A549 (cell line): ENCODE measurements at regions of chr11 and their contacts with region 1.

Region 1: GRCh38 chr11:30333405-30333804 is 10.5 kb downstream of the ARL14EP start:
- DNase-seq: peak in 1 of 2 experiments; percentile 31
- ATAC-seq: peak; percentile 74 to 86; a peak in 5 of 6 replicates
- H3K4me3 ChIP-seq: no peak overlapping the region
- H3K27ac ChIP-seq: no peak overlapping the region
- H3K4me1 ChIP-seq: no peaks in the 10 kb centered on the region
- CTCF ChIP-seq: peak; percentile 61
- EP300 ChIP-seq: no peak
- POLR2A ChIP-seq: no peak
- RAD21 ChIP-seq: peak; percentile 46; a peak in 4 of 5 replicates

Region 2: GRCh38 chr11:30159546-30159945 is 173.9 kb before region 1 on chr11:
- CTCF ChIA-PET with region 1: no interaction called
- POLR2A ChIA-PET with region 1: no interaction called
- DNase-seq: no peak
- ATAC-seq: no peak
- H3K4me3 ChIP-seq: no peak overlapping the region
- H3K27ac ChIP-seq: no peak overlapping the region
- H3K4me1 ChIP-seq: no peaks in the 10 kb centered on the region
- CTCF ChIP-seq: no peak
- EP300 ChIP-seq: no peak
- POLR2A ChIP-seq: no peak
- RAD21 ChIP-seq: no peak

Region 3: GRCh38 chr11:30270671-30271070 is 62.7 kb before region 1 on chr11:
- CTCF ChIA-PET with region 1: no interaction called
- POLR2A ChIA-PET with region 1: no interaction called
- DNase-seq: no peak
- ATAC-seq: no peak
- H3K4me3 ChIP-seq: no peak overlapping the region
- H3K27ac ChIP-seq: no peak overlapping the region
- H3K4me1 ChIP-seq: no peaks in the 10 kb centered on the region
- CTCF ChIP-seq: no peak
- EP300 ChIP-seq: no peak
- POLR2A ChIP-seq: no peak
- RAD21 ChIP-seq: no peak

Region 4: GRCh38 chr11:30322826-30323710 is 10.3 kb before region 1 on chr11 and contains the start of gene ARL14EP:
- CTCF ChIA-PET with region 1: interaction called, 5 read pairs
- POLR2A ChIA-PET with region 1: interaction called, 16 read pairs
- DNase-seq: peak; percentile 71 to 98
- ATAC-seq: peak; percentile 99 to 100
- H3K4me3 ChIP-seq: peak within 1 kb of the TSS; percentile 77
- H3K27ac ChIP-seq: peak within 1 kb of the TSS; percentile 88 to 95
- H3K4me1 ChIP-seq: peaks cover 16% of the 10 kb centered on the region
- CTCF ChIP-seq: no peak
- EP300 ChIP-seq: no peak
- POLR2A ChIP-seq: peak; percentile 77
- RAD21 ChIP-seq: no peak
- polyA plus RNA-seq, gene ARL14EP: 44.8 and 58.2 TPM in 2 replicates